Activated CD4-positive, alpha-beta T cell treated with anti-CD3 and anti-CD28 coated beads for 36 hours (primary cell): ENCODE measurements at regions of chr16 and their contacts with region 1.

Region 1: GRCh38 chr16:3264137-3265036 is 8.0 kb upstream of the MEFV start:
- DNase-seq: peak; percentile 99
- ATAC-seq: peak; percentile 95
- H3K4me3 Mint-ChIP-seq: peak overlapping the region; percentile 83
- H3K27ac Mint-ChIP-seq: peak overlapping the region; percentile 90
- H3K4me1 Mint-ChIP-seq: peaks cover 25% of the 10 kb centered on the region
- H3K27me3 Mint-ChIP-seq: no peaks in the 10 kb centered on the region

Region 2: GRCh38 chr16:2968738-2969544 is 295.4 kb before region 1 on chr16 and contains the start of gene PAQR4:
- CTCF ChIA-PET with region 1: no interaction called
- POLR2A ChIA-PET with region 1: no interaction called
- intact Hi-C with region 1: no loop called
- DNase-seq: peak; percentile 90
- ATAC-seq: peak; percentile 75
- H3K4me3 Mint-ChIP-seq: peak within 1 kb of the TSS; percentile 72
- H3K27ac Mint-ChIP-seq: peak within 1 kb of the TSS; percentile 25
- H3K4me1 Mint-ChIP-seq: peaks cover 31% of the 10 kb centered on the region
- H3K27me3 Mint-ChIP-seq: peaks cover 21% of the 10 kb centered on the region
- total RNA-seq, gene PAQR4: 28.7 to 31.2 TPM

Region 3: GRCh38 chr16:3188925-3189825 is 75.2 kb before region 1 on chr16:
- CTCF ChIA-PET with region 1: no interaction called
- POLR2A ChIA-PET with region 1: no interaction called
- intact Hi-C with region 1: loop called in 1 of 2 experiments (anchors 1 kb)
- DNase-seq: peak; percentile 78
- ATAC-seq: peak; percentile 42
- H3K4me3 Mint-ChIP-seq: peak overlapping the region; percentile 69
- H3K27ac Mint-ChIP-seq: peak overlapping the region; percentile 72
- H3K4me1 Mint-ChIP-seq: peaks cover 46% of the 10 kb centered on the region
- H3K27me3 Mint-ChIP-seq: peaks cover 66% of the 10 kb centered on the region

Region 4: GRCh38 chr16:3234543-3235541 is 29.5 kb before region 1 on chr16 and contains the start of gene ZNF200:
- CTCF ChIA-PET with region 1: no interaction called
- POLR2A ChIA-PET with region 1: no interaction called
- intact Hi-C with region 1: loop called (anchors 1 kb)
- DNase-seq: peak; percentile 98
- ATAC-seq: peak; percentile 94
- H3K4me3 Mint-ChIP-seq: peak within 1 kb of the TSS; percentile 89
- H3K27ac Mint-ChIP-seq: peak within 1 kb of the TSS; percentile 96
- H3K4me1 Mint-ChIP-seq: peaks cover 30% of the 10 kb centered on the region
- H3K27me3 Mint-ChIP-seq: no peaks in the 10 kb centered on the region
- total RNA-seq, gene ZNF200: 8.3 to 9.0 TPM

Region 5: GRCh38 chr16:3364774-3365427 is 100.5 kb after region 1 on chr16:
- CTCF ChIA-PET with region 1: interaction called, 3 read pairs
- POLR2A ChIA-PET with region 1: no interaction called
- intact Hi-C with region 1: loop called in 1 of 2 experiments (anchors 1 kb)
- DNase-seq: peak; percentile 94
- ATAC-seq: peak; percentile 98
- H3K4me3 Mint-ChIP-seq: peak overlapping the region; percentile 76
- H3K27ac Mint-ChIP-seq: peak overlapping the region; percentile 91
- H3K4me1 Mint-ChIP-seq: peaks cover 8% of the 10 kb centered on the region
- H3K27me3 Mint-ChIP-seq: peaks cover 6% of the 10 kb centered on the region

Region 6: GRCh38 chr16:4425378-4426020 is 1161.1 kb after region 1 on chr16 and contains the start of gene DNAJA3:
- CTCF ChIA-PET with region 1: no interaction called
- POLR2A ChIA-PET with region 1: no interaction called
- intact Hi-C with region 1: loop called in 1 of 2 experiments (anchors 5 kb)
- DNase-seq: peak; percentile 96
- ATAC-seq: peak; percentile 93
- H3K4me3 Mint-ChIP-seq: peak within 1 kb of the TSS; percentile 95
- H3K27ac Mint-ChIP-seq: peak within 1 kb of the TSS; percentile 98
- H3K4me1 Mint-ChIP-seq: peaks cover 27% of the 10 kb centered on the region
- H3K27me3 Mint-ChIP-seq: no peaks in the 10 kb centered on the region
- total RNA-seq, gene DNAJA3: 93.9 to 102 TPM